Naive thymus-derived CD4-positive, alpha-beta T cell (primary cell): ENCODE measurements at regions of chr10 and their contacts with region 1.

Region 1: GRCh38 chr10:97025613-97026242 is 160.0 kb downstream of the SLIT1 start:
- DNase-seq: peak in 7 of 9 donors; percentile 24 to 47 (median 39)
- ATAC-seq: peak; percentile 60
- H3K4me3 ChIP-seq: no peak overlapping the region
- H3K4me3 Mint-ChIP-seq: no peak overlapping the region
- H3K27ac ChIP-seq: no peak overlapping the region
- H3K27ac Mint-ChIP-seq: no peak overlapping the region
- H3K4me1 ChIP-seq: no peaks in the 10 kb centered on the region
- H3K4me1 Mint-ChIP-seq: peaks cover 0 to 14% (median 0%) of the 10 kb centered on the region in 7 donors
- H3K27me3 ChIP-seq: no peaks in the 10 kb centered on the region
- H3K27me3 Mint-ChIP-seq: peaks cover 0 to 8% (median 0%) of the 10 kb centered on the region in 5 donors

Region 2: DNA sequence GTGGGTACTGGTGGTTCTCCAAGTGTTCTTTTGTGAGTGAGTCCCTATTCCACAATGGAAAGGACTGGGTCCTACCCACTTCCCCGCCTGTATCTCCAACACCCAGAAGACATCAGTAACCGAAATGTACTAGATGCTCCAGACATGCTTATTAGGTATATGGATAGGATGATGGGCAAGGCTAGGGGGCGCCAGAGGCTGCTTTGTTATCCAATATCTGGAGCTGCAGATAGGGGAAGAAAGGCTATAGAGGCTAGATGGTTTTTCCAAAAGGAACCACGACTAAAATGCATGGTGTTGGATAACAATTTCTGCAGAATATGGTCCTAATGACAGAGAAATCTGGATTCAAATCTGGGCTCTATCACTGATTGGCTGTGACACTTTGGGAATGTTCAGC is 382.8 kb before region 1 on chr10:
- CTCF ChIA-PET with region 1: no interaction called
- POLR2A ChIA-PET with region 1: no interaction called
- intact Hi-C with region 1: loop called (anchors 5 kb)
- DNase-seq: peak in 2 of 9 donors; percentile 33 to 57
- ATAC-seq: peak; percentile 63
- H3K4me3 ChIP-seq: no peak overlapping the region
- H3K4me3 Mint-ChIP-seq: no peak overlapping the region
- H3K27ac ChIP-seq: no peak overlapping the region
- H3K27ac Mint-ChIP-seq: no peak overlapping the region
- H3K4me1 ChIP-seq: no peaks in the 10 kb centered on the region
- H3K4me1 Mint-ChIP-seq: peaks cover 0 to 22% (median 4%) of the 10 kb centered on the region in 7 donors
- H3K27me3 ChIP-seq: no peaks in the 10 kb centered on the region
- H3K27me3 Mint-ChIP-seq: peaks cover 0 to 8% (median 0%) of the 10 kb centered on the region in 5 donors

Region 3: GRCh38 chr10:96765406-96766240 is 260.1 kb before region 1 on chr10:
- CTCF ChIA-PET with region 1: interaction called, 3 read pairs
- POLR2A ChIA-PET with region 1: no interaction called
- intact Hi-C with region 1: loop called in 1 of 2 experiments (anchors 1 kb)
- DNase-seq: peak; percentile 39 to 71 (median 64)
- ATAC-seq: peak; percentile 92
- H3K4me3 ChIP-seq: no peak overlapping the region
- H3K4me3 Mint-ChIP-seq: no peak overlapping the region
- H3K27ac ChIP-seq: no peak overlapping the region
- H3K27ac Mint-ChIP-seq: peak overlapping the region in 1 of 9 donors; percentile 30
- H3K4me1 ChIP-seq: no peaks in the 10 kb centered on the region
- H3K4me1 Mint-ChIP-seq: peaks cover 0 to 6% (median 3%) of the 10 kb centered on the region in 7 donors
- H3K27me3 ChIP-seq: no peaks in the 10 kb centered on the region
- H3K27me3 Mint-ChIP-seq: peaks cover 0 to 4% (median 3%) of the 10 kb centered on the region in 5 donors

Region 4: GRCh38 chr10:96789571-96790108 is 236.1 kb before region 1 on chr10:
- CTCF ChIA-PET with region 1: no interaction called
- POLR2A ChIA-PET with region 1: no interaction called
- intact Hi-C with region 1: loop called in 1 of 2 experiments (anchors 1 kb)
- DNase-seq: peak in 3 of 9 donors; percentile 39 to 65 (median 57)
- ATAC-seq: peak; percentile 90
- H3K4me3 ChIP-seq: no peak overlapping the region
- H3K4me3 Mint-ChIP-seq: no peak overlapping the region
- H3K27ac ChIP-seq: no peak overlapping the region
- H3K27ac Mint-ChIP-seq: no peak overlapping the region
- H3K4me1 ChIP-seq: no peaks in the 10 kb centered on the region
- H3K4me1 Mint-ChIP-seq: peaks cover 0 to 2% (median 0%) of the 10 kb centered on the region in 7 donors
- H3K27me3 ChIP-seq: no peaks in the 10 kb centered on the region
- H3K27me3 Mint-ChIP-seq: peaks cover 18 to 30% (median 28%) of the 10 kb centered on the region in 5 donors

Region 5: GRCh38 chr10:96910488-96911395 is 115.0 kb before region 1 on chr10:
- CTCF ChIA-PET with region 1: interaction called, 4 read pairs
- POLR2A ChIA-PET with region 1: no interaction called
- intact Hi-C with region 1: loop called (anchors 1 to 2 kb)
- DNase-seq: peak in 5 of 9 donors; percentile 15 to 36 (median 29)
- ATAC-seq: peak; percentile 80
- H3K4me3 ChIP-seq: no peak overlapping the region
- H3K4me3 Mint-ChIP-seq: no peak overlapping the region
- H3K27ac ChIP-seq: no peak overlapping the region
- H3K27ac Mint-ChIP-seq: peak overlapping the region in 1 of 9 donors; percentile 4
- H3K4me1 ChIP-seq: peaks cover 3 to 4% of the 10 kb centered on the region in 2 donors
- H3K4me1 Mint-ChIP-seq: peaks cover 3 to 51% (median 33%) of the 10 kb centered on the region in 7 donors
- H3K27me3 ChIP-seq: no peaks in the 10 kb centered on the region
- H3K27me3 Mint-ChIP-seq: no peaks in the 10 kb centered on the region

Region 6: GRCh38 chr10:97002670-97003069 is 23.1 kb before region 1 on chr10:
- CTCF ChIA-PET with region 1: no interaction called
- POLR2A ChIA-PET with region 1: no interaction called
- intact Hi-C with region 1: no loop called
- DNase-seq: no peak
- ATAC-seq: no peak
- H3K4me3 ChIP-seq: no peak overlapping the region
- H3K4me3 Mint-ChIP-seq: no peak overlapping the region
- H3K27ac ChIP-seq: no peak overlapping the region
- H3K27ac Mint-ChIP-seq: no peak overlapping the region
- H3K4me1 ChIP-seq: no peaks in the 10 kb centered on the region
- H3K4me1 Mint-ChIP-seq: no peaks in the 10 kb centered on the region
- H3K27me3 ChIP-seq: no peaks in the 10 kb centered on the region
- H3K27me3 Mint-ChIP-seq: peaks cover 0 to 6% (median 5%) of the 10 kb centered on the region in 5 donors